Psoas muscle (tissue), 8 donors: ENCODE measurements at regions of chr6 and their contacts with region 1.

Region 1: DNA sequence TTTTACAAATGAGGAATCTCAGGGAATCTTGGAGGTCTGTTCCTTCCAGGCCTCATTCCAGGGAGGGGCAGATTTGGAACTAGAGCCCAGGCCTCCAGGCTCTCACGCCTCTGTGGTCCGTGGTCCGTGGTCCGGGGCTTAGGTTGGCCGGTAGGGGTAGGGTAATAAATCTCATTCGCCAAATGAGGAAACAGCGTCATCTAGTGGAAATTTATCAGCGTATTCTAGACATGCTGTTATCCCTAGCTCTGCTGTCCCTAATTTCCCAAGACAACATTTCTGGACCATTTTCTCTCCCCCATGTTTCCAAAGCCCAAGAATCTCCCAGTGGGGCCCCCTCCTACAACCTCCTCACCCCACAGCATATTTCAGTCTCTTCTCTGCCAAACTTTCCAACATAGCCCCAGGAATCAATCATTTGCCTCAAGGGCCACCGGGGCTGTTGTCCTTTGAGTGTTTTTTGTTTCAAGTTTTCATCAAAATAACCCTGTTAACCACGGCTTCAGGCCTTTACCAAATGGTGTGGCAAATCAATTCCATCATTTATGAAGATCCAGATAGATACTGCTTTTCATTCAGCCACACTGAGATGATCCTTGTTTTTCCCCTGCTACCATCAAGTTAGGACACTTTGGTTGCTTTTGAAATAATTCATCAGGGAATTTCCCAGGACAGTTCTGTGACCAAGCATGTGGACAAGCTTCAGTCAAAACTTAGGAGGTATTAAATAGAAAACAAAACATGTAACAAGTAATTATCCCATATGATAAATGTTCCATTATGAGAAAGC is 126.8 kb downstream of the ALDH8A1 start:
- DNase-seq: no peak
- ATAC-seq: peak; percentile 66 to 84 (median 70)
- H3K4me3 ChIP-seq: no peak overlapping the region
- H3K27ac ChIP-seq: peak overlapping the region; percentile 3
- H3K4me1 ChIP-seq: peaks cover 5% of the 10 kb centered on the region
- H3K27me3 ChIP-seq: no peaks in the 10 kb centered on the region
- CTCF ChIP-seq: peak; percentile 86

Region 2: DNA sequence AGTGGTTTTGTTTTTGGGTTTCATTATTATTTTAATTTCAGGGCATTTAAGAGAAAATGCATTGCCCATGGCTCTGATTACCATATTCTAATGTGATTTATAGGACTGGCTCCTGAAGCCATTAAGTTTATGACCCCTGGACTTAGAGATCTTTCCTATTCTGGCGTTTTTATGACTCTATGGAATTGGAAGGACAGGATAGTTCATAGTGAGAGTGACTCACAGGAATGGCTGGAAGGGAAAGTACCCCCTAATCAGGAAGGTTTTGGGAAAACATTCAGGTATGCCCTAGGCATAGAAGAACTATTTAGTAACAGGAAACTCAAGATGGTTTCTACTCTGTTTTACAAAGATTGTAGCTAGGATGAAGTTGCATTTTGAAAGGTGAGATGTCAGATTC is 662.1 kb before region 1 on chr6:
- intact Hi-C with region 1: loop called (anchors 1 to 5 kb)
- DNase-seq: no peak
- ATAC-seq: no peak
- H3K4me3 ChIP-seq: no peak overlapping the region
- H3K27ac ChIP-seq: no peak overlapping the region
- H3K4me1 ChIP-seq: no peaks in the 10 kb centered on the region
- H3K27me3 ChIP-seq: no peaks in the 10 kb centered on the region
- CTCF ChIP-seq: no peak

Region 3: GRCh38 chr6:134347916-134348805 is 475.0 kb before region 1 on chr6:
- intact Hi-C with region 1: loop called in 1 of 2 experiments (anchors 10 kb)
- DNase-seq: peak; percentile 72 to 75
- ATAC-seq: peak; percentile 78 to 81 (median 79)
- H3K4me3 ChIP-seq: peak overlapping the region; percentile 48
- H3K27ac ChIP-seq: peak overlapping the region; percentile 92
- H3K4me1 ChIP-seq: peaks cover 37% of the 10 kb centered on the region
- H3K27me3 ChIP-seq: no peaks in the 10 kb centered on the region
- CTCF ChIP-seq: no peak

Region 4: DNA sequence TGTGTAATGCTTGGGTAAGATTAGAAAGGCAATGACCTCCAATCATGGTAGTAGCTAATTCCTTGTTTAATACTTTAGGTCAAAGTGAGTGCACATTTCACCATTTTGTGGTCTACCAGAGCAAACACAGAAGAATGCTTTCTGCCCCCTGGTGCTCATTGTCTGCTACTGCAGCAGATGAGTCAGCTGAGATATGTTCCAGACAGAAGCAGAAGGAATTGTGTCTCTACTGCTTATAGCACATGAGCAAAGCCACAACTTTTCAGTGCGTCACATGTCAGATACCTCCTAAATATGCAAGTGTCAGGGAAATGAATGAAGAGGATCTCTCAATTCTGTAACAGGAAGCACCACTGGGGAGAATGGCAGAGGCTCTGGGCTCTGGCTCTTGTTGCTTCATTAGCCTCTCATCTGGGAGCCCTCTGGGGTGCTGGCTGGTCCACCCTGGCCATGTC is 182.1 kb before region 1 on chr6:
- intact Hi-C with region 1: loop called (anchors 2 to 5 kb)
- DNase-seq: peak; percentile 76 to 86
- ATAC-seq: peak; percentile 95 to 98 (median 96)
- H3K4me3 ChIP-seq: no peak overlapping the region
- H3K27ac ChIP-seq: peak overlapping the region; percentile 75
- H3K4me1 ChIP-seq: peaks cover 20% of the 10 kb centered on the region
- H3K27me3 ChIP-seq: no peaks in the 10 kb centered on the region
- CTCF ChIP-seq: peak; percentile 97

Region 5: GRCh38 chr6:134882426-134883038 is 59.4 kb after region 1 on chr6:
- intact Hi-C with region 1: loop called in 1 of 2 experiments (anchors 5 kb)
- DNase-seq: peak; percentile 48 to 65
- ATAC-seq: peak; percentile 73 to 94 (median 91)
- H3K4me3 ChIP-seq: no peak overlapping the region
- H3K27ac ChIP-seq: no peak overlapping the region
- H3K4me1 ChIP-seq: peaks cover 4% of the 10 kb centered on the region
- H3K27me3 ChIP-seq: no peaks in the 10 kb centered on the region
- CTCF ChIP-seq: peak; percentile 98

Region 6: DNA sequence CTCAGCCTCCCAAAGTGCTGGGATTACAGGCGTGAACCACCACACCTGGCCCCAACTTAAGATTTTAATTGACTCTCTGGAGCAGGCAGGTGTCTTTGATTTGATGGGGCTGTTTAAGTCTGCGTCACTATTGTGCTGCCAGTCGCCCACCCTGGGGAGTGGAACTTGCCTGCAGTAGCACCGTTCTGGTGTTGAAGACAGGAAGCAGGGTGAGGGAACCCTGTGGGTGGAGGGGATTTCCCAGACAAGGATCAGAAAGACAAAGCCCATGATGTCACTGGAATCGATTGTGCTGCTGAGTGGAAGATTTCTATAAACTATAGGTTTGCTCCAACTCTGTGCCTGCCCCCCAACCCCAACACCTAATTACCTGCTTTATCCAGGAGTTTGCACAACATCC is 115.8 kb after region 1 on chr6:
- intact Hi-C with region 1: loop called in 1 of 2 experiments (anchors 5 kb)
- DNase-seq: no peak
- ATAC-seq: no peak
- H3K4me3 ChIP-seq: no peak overlapping the region
- H3K27ac ChIP-seq: no peak overlapping the region
- H3K4me1 ChIP-seq: no peaks in the 10 kb centered on the region
- H3K27me3 ChIP-seq: no peaks in the 10 kb centered on the region
- CTCF ChIP-seq: no peak